Posterior vena cava (tissue), 2 donors: ENCODE measurements at regions of chr6 and their contacts with region 1.

Region 1: DNA sequence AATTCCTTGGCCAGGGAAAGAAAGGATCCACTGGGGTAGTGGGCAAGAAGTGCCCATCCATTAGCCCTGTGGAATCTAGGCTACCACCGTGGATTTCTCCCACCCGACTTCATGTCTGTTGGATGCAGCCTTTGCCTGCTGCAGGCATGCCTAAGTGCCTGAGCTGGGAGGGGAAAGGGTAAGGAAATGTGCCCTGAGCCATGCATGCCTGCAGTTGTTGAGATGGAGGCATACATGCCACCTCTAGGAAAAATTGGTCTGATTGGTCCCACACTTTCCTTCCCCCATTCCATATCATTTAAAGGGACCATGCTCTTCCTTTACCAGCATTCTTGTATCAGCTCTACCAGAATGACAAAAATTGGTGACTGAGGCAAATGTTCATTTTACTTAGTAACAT is 508.8 kb upstream of the SYNCRIP start:
- DNase-seq: no peak

Region 2: DNA sequence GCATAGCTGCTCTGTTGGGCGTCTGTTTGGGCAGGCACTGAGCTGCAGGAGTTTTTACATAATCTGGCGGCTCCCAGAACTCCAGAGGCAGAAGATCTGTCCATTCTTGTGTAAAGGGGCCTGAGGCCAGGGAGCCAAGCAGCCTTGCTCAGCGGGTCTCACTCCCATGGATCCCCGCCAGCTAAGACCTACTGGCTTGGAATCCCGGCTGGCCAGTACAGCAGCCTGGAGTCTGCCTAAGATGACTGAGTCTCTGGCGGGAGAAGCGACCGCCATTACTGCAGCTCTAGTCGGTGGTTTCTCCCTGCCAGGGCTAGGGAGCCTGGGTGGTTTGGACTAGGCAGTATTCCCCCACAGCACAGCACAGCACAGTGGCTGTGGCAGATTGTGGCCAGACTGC is 240.5 kb before region 1 on chr6:
- intact Hi-C with region 1: no loop called
- DNase-seq: no peak

Region 3: GRCh38 chr6:86744052-86744451 is 592.5 kb after region 1 on chr6:
- intact Hi-C with region 1: loop called in 1 of 2 experiments (anchors 2 kb)
- DNase-seq: no peak